A673 (cell line): ENCODE measurements at regions of chr7 and their contacts with region 1.

Region 1: DNA sequence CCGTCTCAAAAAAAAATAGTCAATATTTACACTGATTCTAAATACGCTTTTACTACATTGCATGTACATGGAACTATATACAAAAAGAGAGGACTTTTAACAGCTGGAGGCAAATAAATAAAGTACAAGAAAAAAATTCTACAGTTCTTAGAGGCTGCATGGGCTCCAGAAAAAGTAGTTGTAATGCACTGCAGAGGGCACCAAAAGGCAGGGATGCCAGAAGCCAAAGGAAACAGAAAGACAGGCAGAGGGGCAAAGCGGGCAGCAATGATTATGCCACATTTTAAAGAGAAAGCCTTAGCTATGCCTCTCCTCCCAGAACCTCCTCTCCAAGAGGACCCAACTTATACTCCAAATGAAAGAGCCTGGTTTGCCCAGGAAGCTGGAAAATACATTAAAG is 11.6 kb upstream of the ADCK2 start:
- DNase-seq: no peak
- H3K4me3 ChIP-seq: no peak overlapping the region
- H3K27ac ChIP-seq: no peak overlapping the region
- H3K4me1 ChIP-seq: no peaks in the 10 kb centered on the region
- H3K27me3 ChIP-seq: no peaks in the 10 kb centered on the region
- CTCF ChIP-seq: peak; percentile 32; the same call in 1 of the 2 replicates

Region 2: GRCh38 chr7:139897431-139898050 is 763.6 kb before region 1 on chr7:
- CTCF ChIA-PET with region 1: no interaction called
- POLR2A ChIA-PET with region 1: no interaction called
- intact Hi-C with region 1: no loop called
- DNase-seq: no peak
- H3K4me3 ChIP-seq: no peak overlapping the region
- H3K27ac ChIP-seq: no peak overlapping the region
- H3K4me1 ChIP-seq: no peaks in the 10 kb centered on the region
- H3K27me3 ChIP-seq: no peaks in the 10 kb centered on the region
- CTCF ChIP-seq: no peak

Region 3: GRCh38 chr7:140541513-140542227 is 119.5 kb before region 1 on chr7:
- CTCF ChIA-PET with region 1: no interaction called
- POLR2A ChIA-PET with region 1: interaction called, 10 read pairs
- intact Hi-C with region 1: no loop called
- DNase-seq: peak; percentile 63
- H3K4me3 ChIP-seq: no peak overlapping the region
- H3K27ac ChIP-seq: no peak overlapping the region
- H3K4me1 ChIP-seq: peaks cover 10% of the 10 kb centered on the region
- H3K27me3 ChIP-seq: no peaks in the 10 kb centered on the region
- CTCF ChIP-seq: no peak

Region 4: GRCh38 chr7:140640727-140641523 is 20.2 kb before region 1 on chr7 and contains the start of gene DENND2A:
- CTCF ChIA-PET with region 1: no interaction called
- POLR2A ChIA-PET with region 1: no interaction called
- intact Hi-C with region 1: no loop called
- DNase-seq: no peak
- H3K4me3 ChIP-seq: peak within 1 kb of the TSS; percentile 46
- H3K27ac ChIP-seq: no peak within 1 kb of the TSS
- H3K4me1 ChIP-seq: peaks cover 3% of the 10 kb centered on the region
- H3K27me3 ChIP-seq: peaks cover 6% of the 10 kb centered on the region
- CTCF ChIP-seq: no peak
- total RNA-seq, gene DENND2A: 0.49 and 0.87 TPM in 2 replicates

Region 5: DNA sequence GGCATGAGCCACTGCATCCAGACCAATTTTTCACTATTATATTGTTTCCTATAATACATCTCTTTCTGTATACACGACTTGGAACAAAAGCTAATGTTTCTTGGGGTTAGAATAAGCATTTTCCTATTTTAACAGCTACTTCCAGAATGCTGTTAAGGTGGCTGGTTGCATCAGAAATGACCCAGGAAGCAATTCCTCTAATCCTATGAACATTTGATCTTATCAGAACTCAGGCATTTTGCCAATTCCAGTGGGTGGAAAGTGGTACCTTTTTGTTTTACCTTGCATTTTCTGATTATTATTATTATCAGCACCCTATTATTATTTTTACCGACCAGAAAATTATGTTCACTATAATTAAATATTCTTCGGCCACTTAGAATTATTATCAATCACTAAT is 108.7 kb after region 1 on chr7:
- CTCF ChIA-PET with region 1: no interaction called
- POLR2A ChIA-PET with region 1: no interaction called
- intact Hi-C with region 1: no loop called
- DNase-seq: no peak
- H3K4me3 ChIP-seq: no peak overlapping the region
- H3K27ac ChIP-seq: no peak overlapping the region
- H3K4me1 ChIP-seq: no peaks in the 10 kb centered on the region
- H3K27me3 ChIP-seq: no peaks in the 10 kb centered on the region
- CTCF ChIP-seq: no peak